Head of caudate nucleus (tissue), 42 donors: ENCODE measurements at regions of chr5 and their contacts with region 1.

Region 1: DNA sequence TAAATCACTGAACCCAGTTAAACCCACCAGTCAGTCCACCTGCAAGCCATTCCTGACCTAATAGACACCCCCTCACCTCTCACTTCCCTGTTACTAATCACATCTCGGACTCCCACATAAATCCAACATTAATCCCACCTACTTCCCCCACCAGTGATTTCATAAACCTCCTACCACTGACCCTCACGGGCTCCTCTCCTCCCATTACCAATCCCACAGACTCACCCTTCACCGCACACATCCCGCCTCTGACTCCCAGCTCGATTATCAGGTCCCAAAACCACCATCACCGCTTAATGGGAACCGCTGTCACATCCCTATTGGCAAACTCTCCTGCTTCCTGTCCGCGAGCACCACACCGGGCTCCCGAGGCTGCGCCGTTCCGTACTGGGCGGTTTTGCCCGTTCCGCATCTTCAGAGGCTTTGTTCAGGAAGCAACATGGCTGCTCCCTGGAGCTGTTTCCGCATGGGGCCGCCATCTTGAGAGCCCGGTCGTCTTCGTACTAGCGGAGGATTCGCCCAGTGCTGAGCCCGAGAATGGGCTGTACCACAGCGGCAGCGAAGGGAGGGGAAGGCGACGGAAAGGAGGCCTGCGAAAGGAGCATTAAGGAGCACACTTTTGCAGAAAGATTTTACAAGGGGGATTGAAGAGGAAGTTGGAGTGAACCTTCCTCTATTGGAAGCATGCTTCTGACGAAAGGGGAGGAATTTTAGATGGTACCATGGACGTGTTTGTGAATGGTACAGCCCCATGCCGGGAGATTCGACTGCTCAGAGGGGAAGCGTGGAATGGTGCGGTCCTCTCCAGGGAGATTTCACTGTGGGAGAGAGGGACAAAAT is at the start of gene ZNF300:
- DNase-seq: peak; percentile 88 to 97 (median 93)

Region 2: GRCh38 chr5:151080623-151081430 is 176.1 kb after region 1 on chr5 and contains the start of gene TNIP1:
- intact Hi-C with region 1: loop called (anchors 2 kb)
- DNase-seq: peak; percentile 75 to 97 (median 94)